ENCODE measurements at regions of chr18 and their contacts with region 1.

Region 1: DNA sequence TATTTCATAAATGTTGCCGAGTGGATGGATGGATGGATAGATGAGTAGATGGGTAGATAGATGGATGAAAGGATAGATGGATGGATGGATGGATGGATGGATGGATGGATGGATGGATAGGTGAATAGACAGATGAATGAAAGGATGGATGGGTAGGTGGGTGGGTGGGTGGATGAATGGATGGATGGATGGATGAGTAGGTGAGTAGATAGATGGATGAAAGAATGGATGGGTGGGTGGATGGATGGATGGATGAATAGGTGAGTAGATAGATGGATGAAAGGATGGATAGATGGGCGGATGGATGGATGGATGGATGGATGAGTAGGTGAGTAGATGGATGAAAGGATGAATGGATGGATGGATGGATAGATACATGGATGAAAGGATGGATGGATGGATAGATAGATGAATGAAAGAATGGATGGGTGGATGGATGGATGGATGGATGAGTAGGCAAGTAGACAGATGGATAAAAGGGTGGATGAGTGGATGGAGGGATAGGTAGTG is 104.3 kb downstream of the SMAD7 start:
- DNase-seq: no peak
- H3K4me3 ChIP-seq: no peak overlapping the region
- H3K27me3 ChIP-seq: no peaks in the 10 kb centered on the region
- CTCF ChIP-seq: no peak

Region 2: GRCh38 chr18:47274961-47275360 is 1571.5 kb before region 1 on chr18:
- CTCF ChIA-PET with region 1: no interaction called
- POLR2A ChIA-PET with region 1: interaction called, 10 read pairs
- DNase-seq: no peak
- H3K4me3 ChIP-seq: no peak overlapping the region
- H3K27me3 ChIP-seq: no peaks in the 10 kb centered on the region
- CTCF ChIP-seq: no peak